Activated T-helper 1 cell treated with anti-CD3 and anti-CD28 coated beads, Interleukin-12 subunit alpha, Interleukin-12 subunit beta, Interleukin-2, Interleukin-4 antibody, amounts not matched to agents 30 ng/mL and 10 ng/mL and 1 ng/mL, durations not matched to agents 14 hours and 24 hours and 36 hours (primary cell): ENCODE measurements at regions of chr11 and their contacts with region 1.

Region 1: GRCh38 chr11:102733232-102733875 is 8.6 kb upstream of the MMP8 start:
- DNase-seq: peak; percentile 15
- H3K4me3 Mint-ChIP-seq: no peak overlapping the region
- H3K27ac Mint-ChIP-seq: no peak overlapping the region
- H3K4me1 Mint-ChIP-seq: no peaks in the 10 kb centered on the region
- H3K27me3 Mint-ChIP-seq: peaks cover 9% of the 10 kb centered on the region

Region 2: GRCh38 chr11:103892603-103893002 is 1159.2 kb after region 1 on chr11:
- intact Hi-C with region 1: loop called (anchors 5 kb)
- DNase-seq: no peak
- H3K4me3 Mint-ChIP-seq: no peak overlapping the region
- H3K27ac Mint-ChIP-seq: no peak overlapping the region
- H3K4me1 Mint-ChIP-seq: no peaks in the 10 kb centered on the region
- H3K27me3 Mint-ChIP-seq: no peaks in the 10 kb centered on the region